ENCODE measurements at regions of chr11 and their contacts with region 1.

Region 1: GRCh38 chr11:62025487-62026105 is 58.2 kb upstream of the FTH1 start:
- DNase-seq: peak; percentile 81
- ATAC-seq: peak; percentile 91 to 96

Region 2: GRCh38 chr11:61971248-61972111 is 54.1 kb before region 1 on chr11:
- intact Hi-C with region 1: loop called in 1 of 2 experiments (anchors 2 kb)
- DNase-seq: peak; percentile 97
- ATAC-seq: peak; percentile 63 to 68